HepG2 (cell line): ENCODE measurements at regions of chr9 and their contacts with region 1.

Region 1: DNA sequence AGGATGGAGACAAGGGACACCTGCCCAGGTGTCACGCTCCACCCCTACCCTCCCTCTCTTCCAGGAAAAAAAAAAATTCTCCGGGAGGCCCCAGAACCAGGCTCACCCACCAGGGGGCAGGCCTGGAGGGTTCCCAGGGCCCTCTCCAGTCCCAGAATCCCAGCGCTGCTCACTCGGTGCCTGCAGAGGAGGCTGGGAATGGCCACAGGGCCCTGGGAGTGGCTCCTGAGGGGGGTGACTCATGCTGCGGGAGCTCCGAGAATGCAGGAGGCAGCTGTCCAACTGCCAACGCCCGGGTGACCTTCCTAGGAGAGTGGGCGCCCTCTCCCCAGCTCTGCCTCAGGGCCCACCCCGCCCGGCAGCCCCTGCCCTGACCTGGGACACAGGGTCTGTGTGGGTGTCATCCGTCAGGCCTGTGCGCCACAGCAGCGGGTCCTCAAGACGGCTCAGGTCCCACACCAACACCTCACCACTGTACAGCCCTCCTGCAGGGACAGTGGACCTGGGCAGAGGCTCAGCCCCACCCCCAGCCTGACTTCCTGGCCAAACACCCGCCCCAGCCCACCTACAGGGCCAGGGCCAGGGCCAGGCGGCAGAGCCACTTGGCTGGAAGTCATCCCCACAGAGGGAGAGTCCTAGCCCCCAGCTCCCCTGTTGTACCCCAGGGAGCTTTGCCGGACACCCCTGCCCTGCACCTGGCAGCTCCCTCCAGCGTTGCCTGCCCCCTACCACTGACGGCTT is 21.2 kb downstream of the DYNC2I2 start:
- DNase-seq: peak; percentile 92
- ATAC-seq: peak; percentile 93
- H3K4me3 ChIP-seq: peak overlapping the region; percentile 57 to 73 (median 60); a peak in 5 of 6 replicates
- H3K27ac ChIP-seq: peak overlapping the region; percentile 85
- H3K4me1 ChIP-seq: peaks cover 21% of the 10 kb centered on the region
- H3K27me3 ChIP-seq: no peaks in the 10 kb centered on the region
- CTCF ChIP-seq: peak; percentile 69
- EP300 ChIP-seq: no peak
- POLR2A ChIP-seq: peak; percentile 30 to 42; a peak in 1 of 4 replicates
- RAD21 ChIP-seq: peak; percentile 84

Region 2: DNA sequence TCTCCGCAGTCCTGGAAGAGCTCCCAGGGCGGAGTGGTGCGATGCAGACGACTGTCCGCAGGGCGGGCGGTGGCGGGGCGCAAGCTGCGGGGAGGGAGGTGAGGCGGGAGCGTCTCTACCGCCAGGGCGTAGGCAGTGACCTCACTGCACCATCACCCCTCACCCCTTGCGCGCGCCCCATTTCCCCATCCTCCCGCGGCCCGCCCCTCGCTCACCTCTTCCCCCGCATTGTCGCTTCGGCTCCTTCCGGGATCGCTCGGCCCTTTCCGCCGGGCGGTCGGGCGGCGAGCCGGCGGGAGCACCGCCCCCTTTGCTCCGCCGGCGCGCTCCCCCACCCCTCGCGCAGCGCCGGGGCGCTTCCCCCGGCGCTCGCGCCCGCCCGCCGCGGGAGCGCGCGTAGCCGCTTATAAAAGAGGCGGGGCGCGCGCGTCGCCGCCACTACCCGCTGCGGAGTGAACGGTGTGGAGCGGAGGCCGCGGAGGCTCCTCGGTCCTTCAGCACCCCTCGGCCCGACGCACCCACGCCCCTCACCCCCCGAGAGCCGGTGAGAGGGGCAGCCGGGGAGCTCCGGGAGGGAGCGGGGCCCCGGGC is 83.2 kb before region 1 on chr9 and contains the start of gene SPTAN1:
- CTCF ChIA-PET with region 1: no interaction called
- POLR2A ChIA-PET with region 1: interaction called, 12 read pairs
- in situ Hi-C with region 1: no loop called
- intact Hi-C with region 1: loop called (anchors 2 kb)
- DNase-seq: peak; percentile 61
- ATAC-seq: peak; percentile 77
- H3K4me3 ChIP-seq: peak within 1 kb of the TSS; percentile 87 to 95 (median 90)
- H3K27ac ChIP-seq: peak within 1 kb of the TSS; percentile 67
- H3K4me1 ChIP-seq: peaks cover 64% of the 10 kb centered on the region
- H3K27me3 ChIP-seq: no peaks in the 10 kb centered on the region; a peak in 1 of 5 replicates
- CTCF ChIP-seq: peak; percentile 23; the same call in 1 of the 2 replicates
- EP300 ChIP-seq: no peak
- POLR2A ChIP-seq: peak; percentile 98 to 99
- RAD21 ChIP-seq: peak; percentile 67
- total RNA-seq, gene SPTAN1: 23.5 and 106 TPM in 2 replicates

Region 3: GRCh38 chr9:128610897-128611296 is 24.6 kb before region 1 on chr9:
- CTCF ChIA-PET with region 1: no interaction called
- POLR2A ChIA-PET with region 1: no interaction called
- in situ Hi-C with region 1: no loop called
- intact Hi-C with region 1: no loop called
- DNase-seq: no peak
- ATAC-seq: no peak
- H3K4me3 ChIP-seq: no peak overlapping the region
- H3K27ac ChIP-seq: no peak overlapping the region
- H3K4me1 ChIP-seq: no peaks in the 10 kb centered on the region
- H3K27me3 ChIP-seq: no peaks in the 10 kb centered on the region
- CTCF ChIP-seq: 0 out of 2 replicates have a peak, but pooled peaks have one; percentile 7
- EP300 ChIP-seq: no peak
- POLR2A ChIP-seq: no peak
- RAD21 ChIP-seq: no peak

Region 4: GRCh38 chr9:128656416-128657343 is 21.2 kb after region 1 on chr9 and contains the start of gene DYNC2I2:
- CTCF ChIA-PET with region 1: no interaction called
- POLR2A ChIA-PET with region 1: interaction called, 12 read pairs
- in situ Hi-C with region 1: no loop called
- intact Hi-C with region 1: no loop called
- DNase-seq: peak; percentile 87
- ATAC-seq: peak; percentile 98
- H3K4me3 ChIP-seq: peak within 1 kb of the TSS; percentile 68 to 84 (median 73)
- H3K27ac ChIP-seq: peak within 1 kb of the TSS; percentile 100
- H3K4me1 ChIP-seq: peaks cover 5% of the 10 kb centered on the region; the same call in 1 of the 2 replicates
- H3K27me3 ChIP-seq: no peaks in the 10 kb centered on the region
- CTCF ChIP-seq: 0 out of 2 replicates have a peak, but pooled peaks have one; percentile 18
- EP300 ChIP-seq: no peak
- POLR2A ChIP-seq: peak; percentile 68 to 74
- RAD21 ChIP-seq: peak; percentile 57
- total RNA-seq, gene DYNC2I2: 31.1 and 40.2 TPM in 2 replicates

Region 5: GRCh38 chr9:128688512-128689292 is 53.2 kb after region 1 on chr9 and contains the start of gene SET:
- CTCF ChIA-PET with region 1: no interaction called
- POLR2A ChIA-PET with region 1: interaction called, 33 read pairs
- in situ Hi-C with region 1: no loop called
- intact Hi-C with region 1: loop called (anchors 5 kb)
- DNase-seq: peak; percentile 84
- ATAC-seq: peak; percentile 70
- H3K4me3 ChIP-seq: peak within 1 kb of the TSS; percentile 71 to 81 (median 77)
- H3K27ac ChIP-seq: peak within 1 kb of the TSS; percentile 91
- H3K4me1 ChIP-seq: peaks cover 65% of the 10 kb centered on the region
- H3K27me3 ChIP-seq: no peaks in the 10 kb centered on the region; a peak in 1 of 5 replicates
- CTCF ChIP-seq: no peak
- EP300 ChIP-seq: no peak; a peak in 1 of 4 replicates
- POLR2A ChIP-seq: peak; percentile 45 to 78; a peak in 1 of 4 replicates
- RAD21 ChIP-seq: peak; percentile 25; the same call in 1 of the 2 replicates
- total RNA-seq, gene SET: 611 and 724 TPM in 2 replicates

Region 6: GRCh38 chr9:128696923-128697707 is 61.7 kb after region 1 on chr9:
- CTCF ChIA-PET with region 1: interaction called, 12 read pairs
- POLR2A ChIA-PET with region 1: interaction called, 13 read pairs
- in situ Hi-C with region 1: no loop called
- intact Hi-C with region 1: loop called (anchors 5 kb)
- DNase-seq: no peak
- ATAC-seq: peak; percentile 18; the same call in 2 of the 3 replicates
- H3K4me3 ChIP-seq: no peak overlapping the region
- H3K27ac ChIP-seq: no peak overlapping the region
- H3K4me1 ChIP-seq: peaks cover 14% of the 10 kb centered on the region
- H3K27me3 ChIP-seq: no peaks in the 10 kb centered on the region
- CTCF ChIP-seq: no peak
- EP300 ChIP-seq: no peak
- POLR2A ChIP-seq: peak in 1 of 2 experiments; percentile 42; a peak in 2 of 4 replicates
- RAD21 ChIP-seq: no peak

Region 7: GRCh38 chr9:128702445-128702948 is 67.0 kb after region 1 on chr9 and contains the start of gene PKN3:
- CTCF ChIA-PET with region 1: interaction called, 12 read pairs
- POLR2A ChIA-PET with region 1: interaction called, 13 read pairs
- in situ Hi-C with region 1: no loop called
- intact Hi-C with region 1: loop called (anchors 5 kb)
- DNase-seq: peak; percentile 74
- ATAC-seq: peak; percentile 87
- H3K4me3 ChIP-seq: peak within 1 kb of the TSS; percentile 89 to 97 (median 92)
- H3K27ac ChIP-seq: peak within 1 kb of the TSS; percentile 85
- H3K4me1 ChIP-seq: peaks cover 13% of the 10 kb centered on the region
- H3K27me3 ChIP-seq: no peaks in the 10 kb centered on the region
- CTCF ChIP-seq: peak; percentile 91
- EP300 ChIP-seq: no peak
- POLR2A ChIP-seq: peak in 1 of 2 experiments; percentile 43; a peak in 1 of 4 replicates
- RAD21 ChIP-seq: peak; percentile 78
- total RNA-seq, gene PKN3: 8.3 and 13.2 TPM in 2 replicates

Region 8: DNA sequence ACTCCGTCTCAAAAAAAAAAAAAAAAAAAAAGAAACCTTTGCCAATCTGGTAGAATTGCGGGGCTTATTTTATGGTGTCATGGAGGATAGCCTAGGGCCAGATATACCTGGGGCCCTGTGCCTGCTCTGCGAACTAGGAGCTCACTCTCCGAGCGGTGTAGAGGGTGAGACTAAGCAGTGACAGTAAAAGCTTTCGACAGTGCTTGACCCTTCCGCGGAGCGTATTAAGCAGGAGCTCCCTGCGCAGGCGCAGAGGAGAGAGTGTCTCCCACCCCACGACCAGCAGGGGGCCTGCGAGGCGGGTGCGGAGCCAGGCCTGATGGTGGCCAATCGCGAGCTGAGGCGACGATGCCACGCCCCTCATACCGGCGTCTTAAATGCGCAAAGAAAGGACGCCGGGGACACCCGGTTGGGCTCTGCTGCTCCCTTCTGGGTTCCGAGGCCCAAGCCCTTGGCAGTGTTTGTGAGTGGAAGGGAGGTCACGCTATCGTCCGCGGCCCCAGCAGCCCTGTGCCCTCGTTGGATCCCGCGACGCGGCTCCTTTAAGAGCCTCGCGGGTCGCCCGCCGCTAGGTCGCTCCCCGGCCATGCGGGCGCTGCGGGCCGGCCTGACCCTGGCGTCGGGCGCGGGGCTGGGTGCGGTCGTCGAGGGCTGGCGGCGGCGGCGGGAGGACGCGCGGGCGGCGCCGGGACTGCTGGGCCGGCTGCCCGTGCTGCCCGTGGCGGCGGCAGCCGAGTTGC is 182.8 kb after region 1 on chr9 and contains the start of gene ENDOG:
- CTCF ChIA-PET with region 1: no interaction called
- POLR2A ChIA-PET with region 1: interaction called, 10 read pairs
- in situ Hi-C with region 1: no loop called
- intact Hi-C with region 1: no loop called
- DNase-seq: peak; percentile 94
- ATAC-seq: peak; percentile 84
- H3K4me3 ChIP-seq: peak within 1 kb of the TSS; percentile 53 to 85 (median 80)
- H3K27ac ChIP-seq: peak within 1 kb of the TSS; percentile 77
- H3K4me1 ChIP-seq: peaks cover 26% of the 10 kb centered on the region
- H3K27me3 ChIP-seq: no peaks in the 10 kb centered on the region
- CTCF ChIP-seq: peak; percentile 99
- EP300 ChIP-seq: peak in 1 of 2 experiments; percentile 26; a peak in 1 of 4 replicates
- POLR2A ChIP-seq: peak in 1 of 2 experiments; percentile 89; a peak in 2 of 4 replicates
- RAD21 ChIP-seq: peak; percentile 63
- total RNA-seq, gene ENDOG: 26.3 and 28.7 TPM in 2 replicates